ENCODE measurements at regions of chr14 and their contacts with region 1.

Region 1: GRCh38 chr14:103847451-103848188 is at the start of gene PPP1R13B:
- DNase-seq: peak; percentile 76 to 96 (median 90)
- H3K4me3 ChIP-seq: peak within 1 kb of the TSS; percentile 58 to 90 (median 77)
- H3K27ac ChIP-seq: peak within 1 kb of the TSS in 58 of 59 donors; percentile 31 to 92 (median 83)
- H3K27me3 ChIP-seq: no peaks in the 10 kb centered on the region
- CTCF ChIP-seq: peak in 13 of 56 donors; percentile 7 to 35 (median 17)
- total RNA-seq, gene PPP1R13B: 36.7 to 122 (median 85.6) TPM

Region 2: GRCh38 chr14:103727313-103727980 is 120.2 kb before region 1 on chr14:
- intact Hi-C with region 1: loop called in 1 of 2 experiments (anchors 5 kb)
- DNase-seq: peak in 4 of 10 donors; percentile 52 to 71 (median 60)
- H3K4me3 ChIP-seq: peak overlapping the region in 14 of 59 donors; percentile 4 to 32 (median 16)
- H3K27ac ChIP-seq: peak overlapping the region in 49 of 59 donors; percentile 7 to 99 (median 67)
- H3K27me3 ChIP-seq: no peaks in the 10 kb centered on the region
- CTCF ChIP-seq: peak in 8 of 56 donors; percentile 5 to 20 (median 11)

Region 3: DNA sequence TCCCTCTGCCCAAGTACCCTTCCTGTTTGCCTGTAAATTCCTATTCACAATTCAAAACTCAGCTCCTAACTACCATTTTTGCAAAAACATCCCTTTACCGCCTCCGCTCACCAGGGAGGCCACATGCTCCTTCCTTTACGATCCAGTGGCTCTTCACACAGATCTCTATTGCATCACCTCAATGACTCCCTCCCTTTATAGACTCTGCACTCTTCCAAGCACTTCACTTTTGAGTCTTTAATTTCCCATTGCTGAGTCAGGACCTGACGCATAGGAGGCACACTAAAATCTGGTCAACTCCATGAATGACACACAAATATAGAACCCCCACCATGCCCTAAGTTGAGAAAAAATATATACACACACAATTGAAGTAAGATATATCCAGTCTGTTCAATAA is 46.2 kb before region 1 on chr14:
- intact Hi-C with region 1: no loop called
- DNase-seq: no peak
- H3K4me3 ChIP-seq: no peak overlapping the region
- H3K27ac ChIP-seq: no peak overlapping the region
- H3K27me3 ChIP-seq: no peaks in the 10 kb centered on the region
- CTCF ChIP-seq: no peak

Region 4: DNA sequence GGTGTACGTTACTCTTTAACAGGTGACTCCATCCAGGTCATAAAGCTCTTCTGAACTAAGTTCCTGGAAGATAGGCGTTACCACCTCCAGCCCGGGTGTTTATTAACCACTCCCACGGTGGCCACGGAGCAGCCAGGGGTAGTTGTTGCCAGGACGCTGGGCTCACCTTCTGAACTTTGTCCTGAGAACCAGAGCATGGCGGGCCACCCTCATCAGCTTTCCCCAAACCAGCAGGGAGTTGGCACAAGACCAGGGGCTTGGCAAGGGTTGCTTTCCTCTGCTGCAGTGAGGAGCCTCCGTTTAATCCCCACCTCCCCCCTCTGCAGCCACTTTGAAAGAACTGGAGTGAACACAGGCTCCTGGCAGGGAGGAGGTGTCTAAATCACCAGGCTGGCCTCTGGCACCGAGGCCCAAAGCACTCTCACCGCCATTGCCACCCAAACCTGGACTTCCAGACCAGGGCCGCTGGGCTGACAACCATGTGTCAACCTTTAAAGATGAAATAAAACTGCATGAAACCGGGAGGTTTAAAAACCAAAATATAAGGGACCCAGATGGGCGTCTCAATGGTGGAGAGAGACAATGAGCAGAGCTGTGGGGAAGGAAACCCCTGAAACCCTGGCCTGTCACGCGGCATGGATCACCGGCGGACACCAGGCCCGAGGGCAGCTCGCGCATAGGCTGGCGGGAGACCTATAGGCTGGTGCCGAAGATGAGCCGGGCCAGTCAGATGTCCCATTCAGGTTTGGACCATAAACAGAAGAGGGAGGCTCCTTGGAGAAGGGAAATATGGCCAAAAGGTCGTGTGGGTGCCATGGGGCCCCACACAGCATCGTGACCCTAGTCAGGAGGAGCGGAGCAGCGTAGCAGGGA is 49.7 kb after region 1 on chr14:
- intact Hi-C with region 1: no loop called
- DNase-seq: no peak
- H3K4me3 ChIP-seq: no peak overlapping the region
- H3K27ac ChIP-seq: no peak overlapping the region
- H3K27me3 ChIP-seq: no peaks in the 10 kb centered on the region
- CTCF ChIP-seq: no peak

Region 5: DNA sequence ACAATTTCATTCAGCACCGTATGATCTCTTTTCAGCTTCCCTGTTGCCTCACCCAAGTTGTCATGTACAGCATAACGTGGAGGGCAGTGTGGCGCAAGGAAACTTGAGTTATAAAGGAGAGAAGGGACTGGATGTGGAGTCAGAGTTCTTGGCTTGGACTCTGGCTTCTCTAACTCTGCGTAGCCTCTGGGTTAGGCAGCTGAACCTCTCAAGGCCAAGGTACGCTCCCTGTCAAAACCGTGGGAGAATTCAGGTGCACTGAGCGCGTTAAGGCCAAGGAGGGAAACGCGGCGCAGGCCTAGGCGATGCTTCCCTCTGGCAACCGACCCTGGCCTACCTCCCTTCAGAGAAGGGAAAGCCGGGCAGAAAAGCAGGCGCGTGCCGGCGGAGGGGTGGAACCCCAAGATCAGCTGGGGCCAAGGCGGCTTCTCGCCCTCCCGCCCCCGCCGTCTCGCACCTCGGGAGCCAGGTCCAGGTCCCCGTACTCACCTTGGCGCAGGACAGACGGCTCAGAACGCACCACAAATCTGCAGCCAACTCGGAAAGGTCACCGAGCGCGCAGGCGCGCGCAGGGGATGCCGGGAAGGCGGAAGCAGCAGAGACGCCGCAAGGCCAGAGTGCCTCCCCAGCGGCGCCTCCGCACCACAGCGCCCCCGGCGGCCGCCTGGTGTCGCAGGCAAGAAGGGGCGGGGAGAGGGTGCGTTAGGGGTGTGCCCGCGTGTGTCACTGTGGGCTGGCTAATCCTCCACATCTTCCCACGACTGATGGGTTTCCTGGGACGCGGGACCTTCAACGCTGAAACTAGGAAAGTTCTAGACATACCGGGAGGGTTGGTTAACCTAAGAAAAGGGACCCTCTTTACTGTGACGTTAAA is 73.6 kb after region 1 on chr14:
- intact Hi-C with region 1: loop called in 1 of 2 experiments (anchors 5 kb)
- DNase-seq: peak; percentile 86 to 96 (median 90)
- H3K4me3 ChIP-seq: peak overlapping the region; percentile 72 to 100 (median 96)
- H3K27ac ChIP-seq: peak overlapping the region in 54 of 59 donors; percentile 31 to 94 (median 76)
- H3K27me3 ChIP-seq: peaks cover 0 to 4% (median 0%) of the 10 kb centered on the region in 45 donors
- CTCF ChIP-seq: peak; percentile 96 to 100 (median 100)

Measured in dorsolateral prefrontal cortex (tissue), 120 donors.